ENCODE measurements at regions of chr3 and their contacts with region 1.

Region 1: DNA sequence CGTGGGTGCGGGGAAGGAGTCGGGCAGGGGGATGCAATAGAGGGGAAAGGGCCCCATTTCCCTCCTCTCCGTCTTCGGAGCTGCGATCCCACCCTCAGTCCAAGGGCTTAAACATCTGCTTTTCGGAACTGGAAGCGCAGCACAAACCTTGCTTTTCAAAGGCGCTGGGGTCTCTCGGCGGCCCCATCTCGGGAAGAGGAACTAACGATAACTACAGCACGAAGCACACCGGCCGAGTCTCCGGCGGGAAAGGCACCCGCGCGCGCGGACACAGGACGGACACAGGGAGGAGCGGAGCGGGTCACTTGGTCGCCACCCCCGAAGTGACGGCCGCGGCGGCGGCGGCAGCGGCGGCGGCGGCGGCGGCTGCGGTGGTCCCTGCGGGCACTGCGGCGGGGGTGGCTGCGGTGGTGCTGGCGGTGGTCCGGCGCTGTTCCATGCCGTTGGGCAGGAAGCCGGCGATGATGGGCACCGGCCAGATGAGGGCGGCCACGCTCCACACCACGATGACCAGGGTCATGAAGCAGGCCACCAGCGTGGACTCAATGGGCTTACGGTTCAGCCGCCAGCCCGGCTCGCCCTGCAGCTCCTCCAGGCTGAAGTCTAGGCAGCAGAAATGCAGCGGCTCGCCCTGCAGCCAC is 1.1 kb downstream of the TMEM158 start:
- DNase-seq: peak; percentile 86

Region 2: DNA sequence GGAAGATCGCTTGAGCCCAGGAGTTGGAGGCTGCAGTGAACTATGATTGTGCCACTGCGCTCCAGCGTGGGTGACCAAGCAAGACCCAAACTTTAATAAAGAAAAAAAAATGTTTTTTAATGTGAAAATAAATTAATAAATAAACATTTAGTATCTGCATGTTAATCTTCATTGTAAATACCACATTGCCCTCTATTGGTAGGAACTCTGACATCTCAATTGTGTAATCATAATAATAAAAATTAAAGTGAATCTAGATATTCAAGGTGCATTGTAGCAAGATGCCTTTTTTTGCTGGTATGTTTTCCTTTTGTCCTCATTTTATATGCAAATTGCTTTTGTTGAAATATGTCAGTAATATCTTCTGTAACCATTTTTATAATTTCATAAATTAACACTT is 274.6 kb after region 1 on chr3:
- intact Hi-C with region 1: loop called (anchors 5 kb)
- DNase-seq: no peak

Measured in cardiac septum (tissue), 1 donor.